MCF 10A (cell line): ENCODE measurements at regions of chr1 and their contacts with region 1.

Region 1: GRCh38 chr1:110203021-110203661 is 7.0 kb upstream of the KCNC4 start:
- DNase-seq: peak; percentile 71
- H3K4me3 Mint-ChIP-seq: no peak overlapping the region
- H3K27ac Mint-ChIP-seq: no peak overlapping the region
- H3K4me1 Mint-ChIP-seq: no peaks in the 10 kb centered on the region
- H3K27me3 Mint-ChIP-seq: no peaks in the 10 kb centered on the region
- CTCF ChIP-seq: peak; percentile 67

Region 2: GRCh38 chr1:110218739-110219138 is 15.6 kb after region 1 on chr1:
- CTCF ChIA-PET with region 1: interaction called, 25 read pairs
- POLR2A ChIA-PET with region 1: no interaction called
- intact Hi-C with region 1: no loop called
- DNase-seq: no peak
- H3K4me3 Mint-ChIP-seq: no peak overlapping the region
- H3K27ac Mint-ChIP-seq: no peak overlapping the region
- H3K4me1 Mint-ChIP-seq: no peaks in the 10 kb centered on the region
- H3K27me3 Mint-ChIP-seq: no peaks in the 10 kb centered on the region
- CTCF ChIP-seq: no peak

Region 3: DNA sequence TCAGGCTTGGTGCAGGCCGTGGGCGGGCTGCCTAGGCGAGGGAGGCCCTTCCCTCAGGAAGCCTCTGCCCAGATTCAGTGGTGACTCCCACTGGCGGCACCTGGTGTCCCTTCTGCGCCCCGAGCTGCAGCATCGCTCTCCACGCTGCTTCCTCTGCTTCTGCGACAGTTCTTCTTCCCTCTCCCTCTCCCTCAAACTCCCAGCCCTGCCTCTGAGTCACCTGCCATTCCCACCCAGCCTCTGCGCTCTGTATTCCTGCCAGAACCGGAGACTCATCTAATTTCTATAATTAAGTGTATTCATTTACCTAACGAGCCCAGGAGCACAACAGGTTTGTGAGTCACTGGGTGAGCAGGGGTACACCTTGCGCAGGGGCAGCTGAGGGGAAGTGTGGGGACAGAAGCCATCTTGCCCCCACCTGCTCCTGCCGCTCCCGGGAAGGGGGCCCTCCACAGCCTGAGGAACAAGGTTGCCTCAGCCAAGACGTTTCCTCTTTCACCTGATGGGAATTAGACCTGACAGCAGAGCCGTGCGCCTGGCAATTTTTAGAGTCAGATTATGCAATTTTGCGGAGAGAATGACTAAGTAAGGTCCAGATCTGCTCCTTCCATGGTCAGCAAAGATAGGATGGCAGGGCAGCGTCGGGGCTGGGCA is 26.3 kb after region 1 on chr1:
- CTCF ChIA-PET with region 1: interaction called, 11 read pairs
- POLR2A ChIA-PET with region 1: no interaction called
- intact Hi-C with region 1: no loop called
- DNase-seq: peak; percentile 83
- H3K4me3 Mint-ChIP-seq: peak overlapping the region; percentile 55
- H3K27ac Mint-ChIP-seq: peak overlapping the region; percentile 56
- H3K4me1 Mint-ChIP-seq: peaks cover 16% of the 10 kb centered on the region
- H3K27me3 Mint-ChIP-seq: no peaks in the 10 kb centered on the region
- CTCF ChIP-seq: no peak

Region 4: GRCh38 chr1:110407260-110408210 is 204.4 kb after region 1 on chr1 and contains the start of gene LAMTOR5:
- CTCF ChIA-PET with region 1: interaction called, 56 read pairs
- POLR2A ChIA-PET with region 1: no interaction called
- intact Hi-C with region 1: loop called (anchors 1 kb)
- DNase-seq: peak; percentile 90
- H3K4me3 Mint-ChIP-seq: peak within 1 kb of the TSS; percentile 100
- H3K27ac Mint-ChIP-seq: peak within 1 kb of the TSS; percentile 100
- H3K4me1 Mint-ChIP-seq: peaks cover 9% of the 10 kb centered on the region
- H3K27me3 Mint-ChIP-seq: no peaks in the 10 kb centered on the region
- CTCF ChIP-seq: no peak
- total RNA-seq, gene LAMTOR5: 111 and 127 TPM in 2 replicates